RWPE1 (cell line): ENCODE measurements at regions of chr1 and their contacts with region 1.

Region 1: GRCh38 chr1:156096640-156097391 is 14.6 kb upstream of the MEX3A start:
- DNase-seq: peak; percentile 82
- H3K27ac ChIP-seq: peak overlapping the region; percentile 77
- CTCF ChIP-seq: peak; percentile 94

Region 2: DNA sequence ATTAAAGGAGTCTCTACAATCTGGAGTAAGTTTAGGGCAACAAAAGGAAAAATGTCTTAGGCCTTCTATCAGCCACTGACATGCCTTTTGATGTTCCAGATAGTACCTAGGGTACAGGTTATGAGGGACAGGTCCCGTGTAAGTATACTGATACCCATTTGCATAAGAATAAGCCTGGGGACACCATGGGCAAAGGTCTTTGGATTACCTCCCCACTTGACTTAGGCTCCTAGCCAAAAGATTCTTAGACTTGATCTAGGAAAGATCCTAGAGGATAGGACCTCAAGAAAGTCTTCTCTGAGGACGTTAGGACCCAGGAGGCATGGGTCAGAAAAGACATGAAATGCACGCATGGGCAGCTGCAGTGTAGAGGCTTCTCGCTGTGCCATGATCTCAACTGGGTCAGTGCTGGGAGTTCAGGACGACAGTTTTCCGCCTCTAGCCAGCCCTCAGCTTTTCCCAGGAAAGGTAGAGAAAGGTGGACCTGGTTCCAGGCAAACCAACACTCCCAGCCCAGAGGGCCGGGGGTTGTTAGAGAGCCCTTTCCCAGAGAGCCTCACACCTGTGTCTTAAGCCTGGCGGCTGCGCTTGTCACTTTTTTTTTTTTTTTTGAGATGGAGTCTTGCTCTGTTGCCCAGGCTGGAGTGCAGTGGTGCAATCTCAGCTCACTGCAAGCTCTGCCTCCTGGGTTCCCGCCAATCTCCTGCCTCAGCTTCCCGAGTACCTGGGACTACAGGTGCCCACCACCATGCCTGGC is 460.2 kb before region 1 on chr1:
- CTCF ChIA-PET with region 1: no interaction called
- POLR2A ChIA-PET with region 1: no interaction called
- DNase-seq: no peak
- H3K27ac ChIP-seq: no peak overlapping the region
- CTCF ChIP-seq: no peak

Region 3: DNA sequence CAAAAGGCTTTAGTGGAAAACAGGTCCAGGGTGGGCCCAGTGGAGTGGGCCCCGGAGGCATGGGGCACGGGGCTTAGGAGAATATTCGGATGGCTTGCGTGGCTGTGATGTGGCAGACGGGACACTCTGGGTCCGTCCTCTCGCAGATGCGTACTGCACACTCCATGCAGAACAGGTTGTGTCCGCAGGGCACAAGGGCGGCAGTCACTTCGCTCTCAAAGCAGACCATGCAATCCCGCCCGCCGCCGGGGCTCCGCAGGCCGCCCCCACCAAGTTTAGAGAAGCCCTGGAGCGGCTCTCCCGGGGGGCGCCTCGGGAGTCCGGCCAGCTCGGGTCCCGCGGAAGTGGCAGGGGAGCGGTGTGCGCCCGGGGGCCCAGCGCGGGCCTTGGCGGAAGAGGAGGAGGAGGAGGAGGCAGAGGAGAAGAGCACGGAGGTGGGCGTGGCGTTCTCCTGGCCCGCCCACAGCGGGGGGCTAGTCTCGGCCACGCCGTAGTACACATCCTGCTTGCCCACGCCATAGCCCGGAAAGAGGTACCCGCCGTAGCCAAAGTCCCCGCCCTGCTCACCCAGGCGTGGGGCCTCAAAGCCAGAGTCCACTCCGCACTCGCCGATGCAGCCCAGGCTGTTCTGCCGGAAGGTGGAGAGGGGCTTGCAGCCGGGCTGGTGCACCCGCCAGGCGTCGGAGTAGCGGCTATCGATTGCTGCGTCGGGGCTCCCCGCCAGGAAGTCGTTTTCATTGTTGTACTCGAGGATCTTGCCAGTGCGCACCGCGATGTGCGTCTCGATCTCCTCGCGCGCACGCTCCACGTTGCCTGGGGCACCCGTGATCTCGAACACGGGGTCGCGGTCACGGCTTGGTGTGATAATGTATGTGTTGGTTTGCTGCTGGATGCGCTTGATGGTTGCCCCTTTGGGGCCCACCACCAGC is 20.1 kb before region 1 on chr1:
- CTCF ChIA-PET with region 1: no interaction called
- POLR2A ChIA-PET with region 1: no interaction called
- DNase-seq: no peak
- H3K27ac ChIP-seq: 0 out of 2 replicates have a peak overlapping the region, but pooled peaks have one; percentile 6
- CTCF ChIP-seq: no peak

Region 4: GRCh38 chr1:156114101-156114916 is 17.5 kb after region 1 on chr1 and contains the start of gene LMNA:
- CTCF ChIA-PET with region 1: interaction called, 20 read pairs
- POLR2A ChIA-PET with region 1: interaction called, 6 read pairs
- DNase-seq: peak; percentile 98
- H3K27ac ChIP-seq: peak within 1 kb of the TSS; percentile 100
- CTCF ChIP-seq: no peak

Region 5: GRCh38 chr1:156123356-156124196 is 26.8 kb after region 1 on chr1:
- CTCF ChIA-PET with region 1: interaction called, 57 read pairs
- POLR2A ChIA-PET with region 1: interaction called, 7 read pairs
- DNase-seq: peak; percentile 79
- H3K27ac ChIP-seq: peak overlapping the region; percentile 100
- CTCF ChIP-seq: peak; percentile 18; the same call in 1 of the 2 replicates

Region 6: GRCh38 chr1:156129706-156130581 is 33.1 kb after region 1 on chr1:
- CTCF ChIA-PET with region 1: interaction called, 57 read pairs
- POLR2A ChIA-PET with region 1: interaction called, 7 read pairs
- DNase-seq: peak; percentile 90
- H3K27ac ChIP-seq: peak overlapping the region; percentile 100
- CTCF ChIP-seq: peak; percentile 96

Region 7: DNA sequence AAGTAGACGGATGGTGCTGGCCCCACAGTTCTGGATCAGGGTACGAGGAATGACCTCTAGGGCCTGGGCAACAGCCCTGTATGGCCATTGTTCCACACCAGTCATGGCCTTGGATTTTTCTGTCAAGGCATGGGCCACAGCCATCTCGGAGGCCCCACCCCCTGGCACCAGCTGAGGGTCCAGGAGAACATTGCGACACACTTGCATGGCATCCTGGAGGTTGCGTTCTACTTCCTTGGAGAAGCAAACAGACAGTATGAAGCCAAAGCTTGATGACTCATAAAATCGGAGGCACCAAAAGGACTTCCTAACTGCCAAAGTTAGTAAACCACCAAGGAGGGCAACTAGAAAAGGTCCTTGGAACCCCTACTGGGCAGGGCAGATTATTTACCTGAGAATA is 214.1 kb after region 1 on chr1:
- CTCF ChIA-PET with region 1: no interaction called
- POLR2A ChIA-PET with region 1: no interaction called
- DNase-seq: no peak
- H3K27ac ChIP-seq: peak overlapping the region; percentile 75
- CTCF ChIP-seq: no peak

Region 8: GRCh38 chr1:156961709-156962108 is 864.9 kb after region 1 on chr1:
- CTCF ChIA-PET with region 1: no interaction called
- POLR2A ChIA-PET with region 1: no interaction called
- DNase-seq: peak; percentile 22
- H3K27ac ChIP-seq: no peak overlapping the region
- CTCF ChIP-seq: no peak